ENCODE measurements at regions of chr3 and their contacts with region 1.

Region 1: DNA sequence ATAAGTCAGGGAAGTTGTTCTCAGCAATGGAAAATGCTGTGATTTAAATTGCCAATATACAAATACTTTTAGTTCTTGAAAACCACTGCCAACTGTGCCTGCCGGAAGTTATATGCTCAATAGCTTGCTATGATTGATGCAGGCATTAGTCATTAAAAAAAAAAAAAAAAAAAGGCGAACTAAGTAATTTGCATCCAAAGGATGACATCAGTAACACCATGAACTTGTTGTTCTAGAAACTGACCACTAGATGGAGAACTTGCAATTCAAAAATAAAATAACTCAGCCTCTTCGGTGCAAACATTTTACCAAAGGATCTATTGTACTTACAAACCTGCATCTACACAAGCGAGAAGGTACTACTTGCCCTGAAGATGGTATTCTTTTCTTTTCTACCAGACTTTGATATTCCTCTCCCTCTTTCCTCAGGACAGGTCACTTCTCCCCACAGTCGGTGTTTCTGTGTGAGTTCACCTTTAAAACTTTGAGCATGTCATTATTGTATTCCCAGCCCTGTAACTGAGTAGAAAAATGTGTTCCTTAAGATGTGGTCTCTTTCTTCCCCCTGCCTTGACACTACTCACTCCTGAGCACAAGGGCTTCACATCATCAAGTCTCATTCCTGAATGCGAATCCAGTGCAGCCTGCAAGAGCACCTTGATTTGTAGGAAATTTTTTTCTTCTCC is 115.0 kb upstream of the VEPH1 start:
- DNase-seq: no peak
- ATAC-seq: peak; percentile 25 to 80 (median 52)
- H3K4me3 ChIP-seq: no peak overlapping the region
- H3K27ac ChIP-seq: no peak overlapping the region
- H3K4me1 ChIP-seq: no peaks in the 10 kb centered on the region
- H3K27me3 ChIP-seq: no peaks in the 10 kb centered on the region
- CTCF ChIP-seq: peak; percentile 70

Region 2: GRCh38 chr3:157581371-157581770 is 36.8 kb before region 1 on chr3:
- intact Hi-C with region 1: no loop called
- DNase-seq: no peak
- ATAC-seq: no peak
- H3K4me3 ChIP-seq: no peak overlapping the region
- H3K27ac ChIP-seq: no peak overlapping the region
- H3K4me1 ChIP-seq: no peaks in the 10 kb centered on the region
- H3K27me3 ChIP-seq: no peaks in the 10 kb centered on the region
- CTCF ChIP-seq: no peak

Region 3: DNA sequence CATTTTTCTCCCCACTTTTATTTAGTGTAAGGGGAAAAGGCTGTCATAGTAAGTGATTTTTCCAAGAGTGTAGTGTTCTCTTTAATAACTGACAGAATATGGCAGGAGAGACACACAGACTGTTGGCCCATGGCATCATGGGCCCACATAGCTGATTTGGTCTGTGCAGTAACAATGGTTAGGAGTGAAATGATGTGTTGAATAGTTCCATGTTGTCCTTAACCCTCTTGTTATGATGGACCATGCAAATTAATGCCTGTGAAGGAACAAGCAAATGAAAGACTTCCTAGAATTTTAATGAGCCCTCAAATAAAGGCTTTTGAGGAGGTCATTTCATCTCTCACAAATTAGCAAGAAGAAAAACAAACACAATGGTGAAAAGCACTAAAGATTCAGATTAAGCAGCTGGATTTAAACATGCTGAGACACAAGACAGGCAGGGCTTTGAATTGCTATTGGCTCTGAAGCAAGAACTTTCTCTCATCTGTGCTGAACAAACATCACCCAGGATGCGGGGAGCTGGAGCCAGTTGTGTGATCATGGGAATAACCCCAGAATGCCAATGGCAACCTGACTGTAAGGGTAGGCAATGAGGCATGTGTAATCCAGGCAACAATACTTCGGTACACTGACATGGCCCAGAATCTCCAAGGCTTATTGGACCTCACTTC is 21.7 kb after region 1 on chr3:
- intact Hi-C with region 1: no loop called
- DNase-seq: no peak
- ATAC-seq: no peak
- H3K4me3 ChIP-seq: no peak overlapping the region
- H3K27ac ChIP-seq: no peak overlapping the region
- H3K4me1 ChIP-seq: no peaks in the 10 kb centered on the region
- H3K27me3 ChIP-seq: peaks cover 0 to 2% (median 0%) of the 10 kb centered on the region in 3 donors
- CTCF ChIP-seq: no peak

Region 4: DNA sequence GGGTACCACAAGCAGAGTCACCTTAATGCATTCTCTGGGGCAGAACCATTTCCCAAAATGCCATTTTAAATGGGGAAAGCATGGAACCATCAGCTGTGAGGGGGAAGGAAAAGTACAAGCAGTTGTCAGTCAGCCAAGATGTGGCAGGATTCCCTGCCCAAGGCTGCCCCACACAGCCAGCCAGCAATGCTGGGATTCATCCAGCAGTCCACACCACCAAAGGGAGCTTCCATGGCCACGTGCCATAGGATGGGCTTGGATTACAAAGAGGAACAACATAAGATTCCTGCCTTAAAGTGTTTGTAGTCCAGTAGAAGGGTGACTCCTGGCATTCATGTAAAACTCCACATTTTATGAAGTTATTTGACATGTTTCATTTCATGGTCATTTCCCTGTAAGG is 254.7 kb after region 1 on chr3:
- intact Hi-C with region 1: loop called in 1 of 2 experiments (anchors 10 kb)
- DNase-seq: peak in 1 of 2 donors; percentile 31
- ATAC-seq: peak in 3 of 4 donors; percentile 36 to 51 (median 49)
- H3K4me3 ChIP-seq: no peak overlapping the region
- H3K27ac ChIP-seq: no peak overlapping the region
- H3K4me1 ChIP-seq: peaks cover 8% of the 10 kb centered on the region
- H3K27me3 ChIP-seq: peaks cover 0 to 2% (median 0%) of the 10 kb centered on the region in 3 donors
- CTCF ChIP-seq: no peak

Region 5: DNA sequence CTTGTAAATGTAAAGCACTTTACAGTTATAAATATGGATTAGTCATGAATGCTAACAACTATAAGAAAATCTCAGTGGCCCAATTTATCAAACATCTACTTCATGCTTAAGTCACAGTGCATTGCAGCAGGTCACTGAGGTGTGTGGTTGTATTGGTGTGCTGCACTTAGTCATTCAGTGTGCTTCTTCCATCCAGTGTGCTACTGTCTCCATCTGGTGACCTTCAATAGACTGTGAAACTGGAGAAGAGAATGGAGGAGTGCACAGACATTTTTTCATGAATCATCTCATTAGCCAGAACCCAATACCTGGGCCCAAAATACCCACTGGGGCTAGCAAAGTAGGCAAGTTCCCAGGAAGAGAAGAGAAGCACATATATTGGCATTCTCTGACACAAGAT is 288.4 kb after region 1 on chr3:
- intact Hi-C with region 1: loop called (anchors 5 kb)
- DNase-seq: no peak
- ATAC-seq: peak in 3 of 4 donors; percentile 48 to 73 (median 51)
- H3K4me3 ChIP-seq: no peak overlapping the region
- H3K27ac ChIP-seq: no peak overlapping the region
- H3K4me1 ChIP-seq: no peaks in the 10 kb centered on the region
- H3K27me3 ChIP-seq: peaks cover 0 to under 1% (median 0%) of the 10 kb centered on the region in 3 donors
- CTCF ChIP-seq: no peak

Region 6: DNA sequence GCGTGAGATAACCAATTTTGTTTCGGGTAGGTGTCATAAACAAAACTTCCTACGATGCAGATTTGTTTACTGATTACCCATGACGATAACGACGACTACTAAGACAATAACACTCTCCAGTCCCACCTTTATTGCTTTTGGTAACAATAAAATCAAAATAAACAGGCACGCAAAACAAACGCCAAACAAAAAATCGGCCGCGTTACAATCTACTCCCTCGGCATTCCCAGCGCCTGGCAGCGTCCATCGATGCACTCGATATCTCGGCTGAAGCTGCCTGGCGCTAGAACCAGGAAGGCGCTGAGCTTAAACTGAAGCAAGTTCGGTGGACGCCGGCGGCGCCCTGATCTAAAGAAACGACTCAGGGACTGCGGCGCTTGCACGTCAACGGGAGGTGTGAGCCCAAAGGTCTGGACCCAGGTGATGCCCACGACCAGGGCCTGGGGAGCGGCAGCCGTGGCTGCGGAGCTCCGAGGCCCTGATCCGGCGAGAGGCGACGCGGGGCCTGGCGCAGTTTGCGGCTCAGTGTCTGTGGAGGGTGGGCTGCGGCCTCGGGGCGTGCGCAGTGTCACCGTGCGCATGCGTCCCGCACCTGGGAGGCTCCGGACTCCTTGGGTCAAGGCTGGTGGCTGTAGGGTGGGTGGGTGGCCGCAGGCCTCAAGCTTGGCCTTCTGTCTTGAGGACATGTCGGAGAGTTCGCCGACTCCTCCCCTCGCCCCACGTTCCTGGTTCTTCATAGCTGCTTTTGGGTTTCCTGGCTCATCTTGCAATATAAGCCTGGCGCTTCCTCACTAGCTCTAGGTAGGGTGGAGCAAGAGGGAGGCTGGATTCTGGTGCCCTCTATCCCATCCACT is 491.8 kb after region 1 on chr3 and contains the start of gene RSRC1:
- intact Hi-C with region 1: loop called in 1 of 2 experiments (anchors 10 kb)
- DNase-seq: peak; percentile 84 to 91
- ATAC-seq: peak; percentile 91 to 96 (median 94)
- H3K4me3 ChIP-seq: peak within 1 kb of the TSS; percentile 80
- H3K27ac ChIP-seq: peak within 1 kb of the TSS; percentile 75
- H3K4me1 ChIP-seq: peaks cover 15% of the 10 kb centered on the region
- H3K27me3 ChIP-seq: peaks cover 9 to 42% (median 20%) of the 10 kb centered on the region in 3 donors
- CTCF ChIP-seq: no peak
- total RNA-seq, gene RSRC1: 16.1 to 26.3 (median 19.4) TPM

Region 7: GRCh38 chr3:158434412-158435038 is 816.3 kb after region 1 on chr3:
- intact Hi-C with region 1: loop called in 1 of 2 experiments (anchors 5 kb)
- DNase-seq: peak in 1 of 2 donors; percentile 10
- ATAC-seq: peak; percentile 57 to 83 (median 72)
- H3K4me3 ChIP-seq: no peak overlapping the region
- H3K27ac ChIP-seq: no peak overlapping the region
- H3K4me1 ChIP-seq: no peaks in the 10 kb centered on the region
- H3K27me3 ChIP-seq: no peaks in the 10 kb centered on the region
- CTCF ChIP-seq: peak; percentile 69

Region 8: DNA sequence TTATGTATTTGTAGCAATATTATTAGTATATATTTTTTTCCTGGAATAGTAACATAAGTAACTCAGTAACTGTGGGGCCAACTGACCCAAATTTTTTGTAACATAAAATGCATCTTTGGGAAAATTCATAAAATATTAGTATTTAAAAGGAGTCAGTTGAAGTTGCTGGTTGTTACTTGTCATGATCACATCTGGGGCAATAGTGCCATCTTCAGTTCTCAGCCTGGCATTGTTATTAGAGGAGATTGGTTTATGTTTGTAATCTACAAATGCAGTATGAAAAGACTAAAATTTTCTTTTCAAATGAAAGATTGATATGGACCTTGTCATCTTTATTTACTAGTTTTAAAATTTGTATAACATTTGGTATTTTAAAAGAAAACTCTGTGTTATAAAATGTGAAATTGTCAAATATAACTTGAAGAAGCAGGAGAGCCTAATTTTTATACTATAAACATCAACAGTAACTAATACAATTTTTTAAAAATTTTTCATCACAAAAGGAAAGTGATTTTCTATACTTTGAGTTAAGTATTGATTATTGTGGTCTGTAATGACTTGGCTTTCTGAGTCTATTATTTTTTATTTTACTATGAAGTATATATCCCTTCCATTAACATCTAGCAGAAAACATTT is 914.0 kb after region 1 on chr3:
- intact Hi-C with region 1: loop called (anchors 5 kb)
- DNase-seq: no peak
- ATAC-seq: no peak
- H3K4me3 ChIP-seq: no peak overlapping the region
- H3K27ac ChIP-seq: no peak overlapping the region
- H3K4me1 ChIP-seq: no peaks in the 10 kb centered on the region
- H3K27me3 ChIP-seq: no peaks in the 10 kb centered on the region
- CTCF ChIP-seq: peak; percentile 44